WTC11 (cell line): ENCODE measurements at regions of chr1 and their contacts with region 1.

Region 1: GRCh38 chr1:39653546-39654031 is 14.1 kb upstream of the HEYL start:
- DNase-seq: peak; percentile 83
- ATAC-seq: peak; percentile 64
- H3K4me3 Mint-ChIP-seq: no peak overlapping the region
- H3K27ac Mint-ChIP-seq: no peak overlapping the region
- H3K4me1 Mint-ChIP-seq: peaks cover 5% of the 10 kb centered on the region
- H3K27me3 Mint-ChIP-seq: peaks cover 71% of the 10 kb centered on the region
- CTCF ChIP-seq: peak; percentile 67

Region 2: GRCh38 chr1:39446986-39447567 is 206.5 kb before region 1 on chr1:
- CTCF ChIA-PET with region 1: no interaction called
- POLR2A ChIA-PET with region 1: no interaction called
- DNase-seq: no peak
- ATAC-seq: no peak
- H3K4me3 Mint-ChIP-seq: no peak overlapping the region
- H3K27ac Mint-ChIP-seq: no peak overlapping the region; the same call in 1 of the 2 replicates
- H3K4me1 Mint-ChIP-seq: no peaks in the 10 kb centered on the region
- H3K27me3 Mint-ChIP-seq: no peaks in the 10 kb centered on the region
- CTCF ChIP-seq: no peak

Region 3: GRCh38 chr1:39575191-39576015 is 78.2 kb before region 1 on chr1:
- CTCF ChIA-PET with region 1: interaction called, 11 read pairs
- POLR2A ChIA-PET with region 1: no interaction called
- DNase-seq: no peak
- ATAC-seq: no peak; the same call in 1 of the 2 replicates
- H3K4me3 Mint-ChIP-seq: peak overlapping the region; percentile 85
- H3K27ac Mint-ChIP-seq: peak overlapping the region; percentile 44
- H3K4me1 Mint-ChIP-seq: peaks cover 27% of the 10 kb centered on the region
- H3K27me3 Mint-ChIP-seq: peaks cover 5% of the 10 kb centered on the region; the same call in 1 of the 2 replicates
- CTCF ChIP-seq: no peak

Region 4: DNA sequence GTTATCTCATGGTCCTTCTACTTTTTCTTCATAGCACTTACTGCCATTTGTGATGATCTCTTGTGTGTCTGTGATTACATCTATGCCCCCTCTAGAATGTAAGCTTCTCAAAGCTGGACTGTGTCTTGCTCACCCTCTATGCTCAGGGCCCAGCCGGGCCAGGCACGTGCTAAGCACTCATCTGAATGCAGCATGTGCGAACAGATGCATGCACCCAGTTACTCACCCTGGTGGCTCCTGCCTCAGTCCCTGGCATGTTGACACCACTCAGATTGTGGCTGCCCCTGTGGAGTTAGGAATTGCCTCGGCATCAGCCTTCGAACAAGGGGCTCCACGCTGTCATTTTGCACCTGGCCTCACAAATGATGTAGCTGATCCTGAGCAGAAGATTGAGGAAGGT is 57.4 kb before region 1 on chr1:
- CTCF ChIA-PET with region 1: interaction called, 10 read pairs
- POLR2A ChIA-PET with region 1: no interaction called
- DNase-seq: no peak
- ATAC-seq: no peak
- H3K4me3 Mint-ChIP-seq: no peak overlapping the region
- H3K27ac Mint-ChIP-seq: no peak overlapping the region
- H3K4me1 Mint-ChIP-seq: no peaks in the 10 kb centered on the region
- H3K27me3 Mint-ChIP-seq: peaks cover 66% of the 10 kb centered on the region
- CTCF ChIP-seq: no peak

Region 5: DNA sequence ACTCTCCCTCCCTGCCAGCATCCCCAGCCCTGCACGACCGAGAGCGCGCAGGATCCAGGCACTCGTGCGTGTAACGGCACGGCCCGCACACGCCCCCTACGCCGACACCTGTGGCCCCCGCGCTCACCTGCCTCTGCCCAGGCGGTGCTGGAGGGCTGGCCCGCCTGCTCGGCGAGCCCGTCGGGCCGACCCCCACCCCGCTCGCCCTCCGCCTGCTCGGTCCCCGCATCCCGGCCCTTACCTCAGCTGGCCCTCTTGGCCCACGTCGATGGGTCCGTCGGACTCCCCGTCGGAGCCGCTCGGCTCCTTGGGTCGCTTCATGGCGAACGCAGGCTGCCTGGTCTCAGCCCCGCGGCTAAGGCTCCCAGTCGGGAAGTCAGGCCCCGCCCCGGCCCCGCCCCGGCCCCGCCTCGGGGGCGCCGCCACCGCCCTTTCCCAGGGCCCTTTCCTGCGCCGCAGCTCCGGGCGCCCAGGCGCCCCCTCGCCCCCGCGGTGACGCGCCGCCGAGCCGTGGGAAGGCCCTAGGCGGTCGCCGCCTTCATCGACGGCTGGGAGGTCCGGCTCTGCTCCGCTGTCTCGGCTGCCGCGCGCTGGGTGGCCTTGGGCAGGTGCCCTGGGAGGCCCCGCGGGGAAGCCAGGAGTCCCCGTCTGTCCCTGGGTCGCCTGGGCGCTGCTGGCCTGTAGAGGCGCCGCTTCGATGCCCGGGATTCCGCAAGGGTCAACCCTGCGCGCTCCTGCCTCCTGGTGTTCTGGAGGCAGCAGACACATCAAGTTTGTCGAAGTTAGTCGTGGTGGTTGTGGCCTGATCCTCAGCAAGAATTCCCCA is 14.1 kb before region 1 on chr1 and contains the start of gene HEYL:
- CTCF ChIA-PET with region 1: interaction called, 18 read pairs
- POLR2A ChIA-PET with region 1: no interaction called
- DNase-seq: peak; percentile 86
- ATAC-seq: peak; percentile 86
- H3K4me3 Mint-ChIP-seq: peak within 1 kb of the TSS; percentile 69
- H3K27ac Mint-ChIP-seq: no peak within 1 kb of the TSS
- H3K4me1 Mint-ChIP-seq: peaks cover 10% of the 10 kb centered on the region
- H3K27me3 Mint-ChIP-seq: peaks cover 96% of the 10 kb centered on the region
- CTCF ChIP-seq: 0 out of 2 replicates have a peak, but pooled peaks have one; percentile 5
- total RNA-seq, gene HEYL: 2.3 to 3.6 TPM (median 3.2 TPM) in 3 replicates

Region 6: DNA sequence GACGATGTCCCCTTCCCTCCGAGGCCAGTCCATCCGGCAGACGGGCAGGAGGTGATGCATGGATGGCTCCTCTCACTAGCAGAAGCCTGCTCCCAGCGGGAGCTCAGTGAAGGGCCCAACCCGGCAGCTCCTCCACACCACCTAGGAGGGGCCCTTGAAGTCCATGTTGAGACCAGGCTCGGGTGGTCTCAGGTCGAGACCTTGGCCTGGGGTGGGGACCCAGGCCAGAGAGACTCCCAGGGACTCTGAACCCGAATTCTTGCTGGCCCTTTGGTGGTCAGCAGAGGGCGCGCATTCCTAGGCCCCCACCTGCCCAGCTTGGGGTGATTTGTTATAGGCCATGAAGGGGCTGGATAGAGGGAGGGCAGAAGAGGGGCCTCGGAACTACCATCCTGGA is 19.0 kb after region 1 on chr1:
- CTCF ChIA-PET with region 1: interaction called, 90 read pairs
- POLR2A ChIA-PET with region 1: interaction called, 6 read pairs
- DNase-seq: peak; percentile 68
- ATAC-seq: peak; percentile 64
- H3K4me3 Mint-ChIP-seq: peak overlapping the region; percentile 63
- H3K27ac Mint-ChIP-seq: no peak overlapping the region
- H3K4me1 Mint-ChIP-seq: no peaks in the 10 kb centered on the region
- H3K27me3 Mint-ChIP-seq: peaks cover 100% of the 10 kb centered on the region
- CTCF ChIP-seq: peak; percentile 33; the same call in 1 of the 2 replicates

Region 7: DNA sequence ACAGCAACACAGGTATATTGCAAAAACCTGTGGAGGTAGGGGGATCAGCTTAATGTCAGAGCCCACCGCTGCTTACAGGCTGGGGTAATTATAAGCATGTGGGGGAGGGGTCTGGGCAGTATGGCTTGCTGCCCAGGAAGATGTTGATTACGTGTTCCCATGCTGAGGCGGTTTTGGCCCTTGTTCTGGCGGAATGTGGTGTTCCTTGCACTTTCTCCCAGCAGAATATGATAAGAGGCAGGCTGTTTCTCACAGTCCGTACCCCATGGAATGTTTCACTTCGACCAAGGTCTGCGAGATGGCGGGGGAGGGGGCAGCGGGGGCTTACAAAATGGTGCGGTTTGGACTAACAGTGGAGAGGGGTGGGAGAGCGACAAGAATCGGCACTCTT is 47.5 kb after region 1 on chr1:
- CTCF ChIA-PET with region 1: interaction called, 34 read pairs
- POLR2A ChIA-PET with region 1: interaction called, 3 read pairs
- DNase-seq: peak; percentile 31
- ATAC-seq: peak; percentile 12
- H3K4me3 Mint-ChIP-seq: peak overlapping the region; percentile 50
- H3K27ac Mint-ChIP-seq: no peak overlapping the region
- H3K4me1 Mint-ChIP-seq: peaks cover 19% of the 10 kb centered on the region
- H3K27me3 Mint-ChIP-seq: peaks cover 100% of the 10 kb centered on the region
- CTCF ChIP-seq: no peak

Region 8: DNA sequence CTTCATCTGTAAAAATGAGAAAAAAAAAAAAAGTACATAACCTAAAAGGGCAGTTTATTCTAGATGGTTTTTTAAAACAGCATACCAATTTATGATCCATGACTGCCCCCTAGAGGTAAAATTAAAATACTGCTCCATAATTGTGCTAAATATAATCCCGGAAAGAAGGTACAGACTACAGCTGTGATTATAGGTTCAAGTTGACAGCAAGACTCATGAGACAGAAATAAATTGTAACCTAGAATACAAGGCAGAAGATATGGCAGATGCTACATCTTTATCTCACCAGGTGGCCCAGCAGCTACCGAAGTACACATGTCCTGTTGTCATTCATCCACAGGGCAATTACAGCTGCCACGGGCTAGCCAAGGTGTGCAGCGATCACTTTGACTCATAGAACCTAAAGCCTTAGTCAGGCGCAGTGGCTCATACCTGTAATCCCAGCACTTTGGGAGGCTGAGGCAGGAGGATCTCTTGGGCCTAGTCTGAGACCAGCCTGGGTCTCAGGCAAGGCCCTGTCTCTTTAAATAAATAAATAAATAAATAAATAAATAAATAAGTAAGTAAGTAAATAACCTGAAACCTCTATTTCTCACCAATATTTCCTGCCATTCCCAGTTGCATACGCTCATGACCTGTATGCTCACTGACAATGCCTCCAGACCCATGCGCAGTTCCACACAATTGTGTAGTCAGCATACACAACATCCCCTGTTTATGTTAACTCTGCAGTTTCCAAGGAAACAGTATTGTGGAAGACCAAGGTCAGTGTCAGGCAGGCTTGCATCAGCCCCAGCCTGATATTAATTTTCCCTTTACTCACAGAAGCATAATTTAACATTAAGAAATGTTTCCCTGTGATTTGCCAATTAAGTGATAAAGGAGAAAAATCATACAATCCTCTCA is 66.8 kb after region 1 on chr1:
- CTCF ChIA-PET with region 1: interaction called, 10 read pairs
- POLR2A ChIA-PET with region 1: no interaction called
- DNase-seq: no peak
- ATAC-seq: no peak; the same call in 1 of the 2 replicates
- H3K4me3 Mint-ChIP-seq: no peak overlapping the region
- H3K27ac Mint-ChIP-seq: no peak overlapping the region
- H3K4me1 Mint-ChIP-seq: no peaks in the 10 kb centered on the region
- H3K27me3 Mint-ChIP-seq: peaks cover 94% of the 10 kb centered on the region
- CTCF ChIP-seq: peak; percentile 51; the same call in 1 of the 2 replicates